Activated naive CD4-positive, alpha-beta T cell treated with anti-CD3 and anti-CD28 coated beads, Interleukin-2, amount 10 ng/mL, durations not matched to agents 7 days and 5 days (primary cell): ENCODE measurements at regions of chr3 and their contacts with region 1.

Region 1: GRCh38 chr3:4350789-4351163 is 47.6 kb downstream of the SETMAR start:
- DNase-seq: peak; percentile 61
- H3K4me3 Mint-ChIP-seq: peak overlapping the region; percentile 49
- H3K27ac Mint-ChIP-seq: peak overlapping the region; percentile 2
- H3K4me1 Mint-ChIP-seq: peaks cover 21% of the 10 kb centered on the region
- H3K27me3 Mint-ChIP-seq: no peaks in the 10 kb centered on the region

Region 2: DNA sequence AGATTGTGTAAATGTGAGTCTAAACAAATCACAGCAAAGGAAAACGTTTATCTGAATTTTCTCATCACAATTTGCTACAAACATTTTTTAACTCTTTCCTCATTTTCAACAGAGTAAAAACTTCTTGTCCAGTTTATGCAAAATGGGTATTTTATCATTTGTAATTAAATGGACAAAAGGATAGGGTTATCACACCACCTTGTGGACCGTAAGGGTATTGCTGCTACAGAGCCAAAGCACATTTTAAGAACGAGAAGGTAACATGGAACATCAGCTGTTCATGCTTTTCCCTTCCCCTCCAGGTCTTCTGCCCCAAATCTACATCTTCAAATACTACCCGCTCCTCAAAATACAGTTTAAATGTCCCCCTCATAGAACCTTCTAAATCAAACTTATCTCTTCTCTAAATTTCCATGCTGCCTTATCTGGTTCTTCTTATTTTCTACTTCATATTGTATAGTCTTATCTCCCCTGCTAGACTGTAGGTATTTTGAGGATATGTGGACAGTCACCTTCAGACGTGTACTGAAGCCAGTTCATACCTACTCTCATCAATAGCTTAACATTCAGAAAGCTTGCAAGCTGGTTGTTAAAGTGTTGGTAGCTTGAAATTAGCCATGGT is 60.4 kb before region 1 on chr3:
- CTCF ChIA-PET with region 1: no interaction called
- DNase-seq: peak; percentile 45
- H3K4me3 Mint-ChIP-seq: no peak overlapping the region
- H3K27ac Mint-ChIP-seq: no peak overlapping the region
- H3K4me1 Mint-ChIP-seq: peaks cover 6% of the 10 kb centered on the region
- H3K27me3 Mint-ChIP-seq: no peaks in the 10 kb centered on the region

Region 3: GRCh38 chr3:4340411-4341335 is 10.1 kb before region 1 on chr3:
- CTCF ChIA-PET with region 1: interaction called, 22 read pairs
- DNase-seq: no peak
- H3K4me3 Mint-ChIP-seq: no peak overlapping the region
- H3K27ac Mint-ChIP-seq: no peak overlapping the region
- H3K4me1 Mint-ChIP-seq: peaks cover 5% of the 10 kb centered on the region
- H3K27me3 Mint-ChIP-seq: peaks cover 4% of the 10 kb centered on the region

Region 4: GRCh38 chr3:4373669-4374068 is 22.9 kb after region 1 on chr3:
- CTCF ChIA-PET with region 1: no interaction called
- DNase-seq: no peak
- H3K4me3 Mint-ChIP-seq: no peak overlapping the region
- H3K27ac Mint-ChIP-seq: no peak overlapping the region
- H3K4me1 Mint-ChIP-seq: no peaks in the 10 kb centered on the region
- H3K27me3 Mint-ChIP-seq: no peaks in the 10 kb centered on the region

Region 5: GRCh38 chr3:4493014-4493940 is 142.5 kb after region 1 on chr3 and contains the start of gene ITPR1:
- CTCF ChIA-PET with region 1: interaction called, 24 read pairs
- DNase-seq: peak; percentile 99
- H3K4me3 Mint-ChIP-seq: peak within 1 kb of the TSS; percentile 93
- H3K27ac Mint-ChIP-seq: peak within 1 kb of the TSS; percentile 80
- H3K4me1 Mint-ChIP-seq: peaks cover 39% of the 10 kb centered on the region
- H3K27me3 Mint-ChIP-seq: peaks cover 22% of the 10 kb centered on the region

Region 6: DNA sequence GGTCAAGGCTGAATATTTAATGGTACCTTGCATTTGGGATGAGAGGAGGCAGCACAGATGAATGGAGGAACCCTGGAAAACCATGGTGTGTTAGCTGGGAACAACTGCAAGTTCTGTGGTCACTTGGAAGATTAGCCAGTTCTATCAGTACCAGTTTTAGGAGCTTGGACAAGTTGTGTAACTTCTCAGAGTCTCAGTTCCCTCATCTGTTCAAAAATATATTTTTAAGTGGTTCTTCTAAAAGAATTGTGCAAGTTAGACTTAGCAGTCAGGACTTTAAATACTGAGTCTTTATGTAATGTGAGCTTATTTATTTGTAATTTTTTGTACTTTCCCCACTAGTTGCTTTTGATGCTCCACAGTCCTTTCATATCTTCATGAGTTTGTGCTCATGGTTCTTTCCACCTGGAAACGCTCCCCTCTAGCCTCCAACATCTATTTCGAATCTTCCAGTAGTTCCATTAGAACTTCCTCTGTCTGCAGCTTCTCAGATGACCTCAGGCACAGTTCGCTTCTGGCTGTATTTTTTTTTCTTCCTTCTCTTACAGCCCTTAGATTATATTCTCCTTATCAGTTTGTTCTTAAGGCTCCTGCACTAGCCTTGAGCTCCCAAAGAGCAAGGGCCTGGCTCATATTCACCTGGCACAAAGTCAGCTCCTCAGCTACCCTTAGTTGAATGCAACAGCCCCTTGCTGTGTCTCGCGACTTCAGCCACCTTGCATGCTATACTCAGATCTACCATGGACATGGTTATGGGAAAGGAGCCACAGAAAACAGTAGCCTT is 169.4 kb after region 1 on chr3:
- CTCF ChIA-PET with region 1: interaction called, 15 read pairs
- DNase-seq: no peak
- H3K4me3 Mint-ChIP-seq: no peak overlapping the region
- H3K27ac Mint-ChIP-seq: peak overlapping the region; percentile 35
- H3K4me1 Mint-ChIP-seq: peaks cover 34% of the 10 kb centered on the region
- H3K27me3 Mint-ChIP-seq: no peaks in the 10 kb centered on the region

Region 7: DNA sequence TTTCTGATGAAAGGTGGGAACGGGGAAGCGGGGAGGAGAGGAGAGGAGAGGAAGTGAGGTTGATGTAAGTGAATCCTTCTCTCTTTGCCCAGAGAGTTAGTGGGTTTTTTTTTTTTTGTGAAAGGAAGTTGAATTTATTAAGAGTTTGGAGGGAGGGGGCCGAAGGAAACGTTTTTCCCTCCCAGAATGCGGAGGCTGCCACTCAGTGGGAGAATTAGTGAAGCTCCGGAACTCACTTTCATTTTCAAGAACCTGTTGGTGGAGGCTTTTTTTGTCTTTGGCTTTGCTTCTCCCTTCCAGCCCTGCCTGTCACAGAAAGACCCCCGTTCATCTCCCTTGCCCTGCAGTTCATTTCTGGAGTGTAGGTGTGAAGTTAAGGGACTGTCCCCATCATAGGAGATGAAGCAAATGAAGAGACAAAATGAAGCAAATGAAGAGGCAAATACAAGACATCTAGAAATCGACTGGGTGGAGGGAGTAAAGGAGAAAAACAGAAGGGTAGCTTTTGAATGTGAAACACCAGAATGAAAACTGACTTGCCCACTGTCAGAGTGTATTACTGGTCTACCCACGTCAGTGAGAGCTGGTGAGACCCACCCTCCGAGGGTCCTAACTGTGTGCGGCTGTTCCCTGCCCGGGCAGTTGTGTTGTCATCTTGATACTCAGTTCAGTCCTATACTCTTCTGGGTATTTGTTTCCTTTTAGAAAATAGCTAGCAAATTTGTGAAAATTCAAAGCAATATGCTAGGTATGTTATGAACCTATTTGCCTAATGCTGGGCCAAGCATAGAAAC is 233.9 kb after region 1 on chr3:
- CTCF ChIA-PET with region 1: interaction called, 29 read pairs
- DNase-seq: peak; percentile 37
- H3K4me3 Mint-ChIP-seq: peak overlapping the region; percentile 72
- H3K27ac Mint-ChIP-seq: peak overlapping the region; percentile 78
- H3K4me1 Mint-ChIP-seq: peaks cover 26% of the 10 kb centered on the region
- H3K27me3 Mint-ChIP-seq: no peaks in the 10 kb centered on the region

Region 8: DNA sequence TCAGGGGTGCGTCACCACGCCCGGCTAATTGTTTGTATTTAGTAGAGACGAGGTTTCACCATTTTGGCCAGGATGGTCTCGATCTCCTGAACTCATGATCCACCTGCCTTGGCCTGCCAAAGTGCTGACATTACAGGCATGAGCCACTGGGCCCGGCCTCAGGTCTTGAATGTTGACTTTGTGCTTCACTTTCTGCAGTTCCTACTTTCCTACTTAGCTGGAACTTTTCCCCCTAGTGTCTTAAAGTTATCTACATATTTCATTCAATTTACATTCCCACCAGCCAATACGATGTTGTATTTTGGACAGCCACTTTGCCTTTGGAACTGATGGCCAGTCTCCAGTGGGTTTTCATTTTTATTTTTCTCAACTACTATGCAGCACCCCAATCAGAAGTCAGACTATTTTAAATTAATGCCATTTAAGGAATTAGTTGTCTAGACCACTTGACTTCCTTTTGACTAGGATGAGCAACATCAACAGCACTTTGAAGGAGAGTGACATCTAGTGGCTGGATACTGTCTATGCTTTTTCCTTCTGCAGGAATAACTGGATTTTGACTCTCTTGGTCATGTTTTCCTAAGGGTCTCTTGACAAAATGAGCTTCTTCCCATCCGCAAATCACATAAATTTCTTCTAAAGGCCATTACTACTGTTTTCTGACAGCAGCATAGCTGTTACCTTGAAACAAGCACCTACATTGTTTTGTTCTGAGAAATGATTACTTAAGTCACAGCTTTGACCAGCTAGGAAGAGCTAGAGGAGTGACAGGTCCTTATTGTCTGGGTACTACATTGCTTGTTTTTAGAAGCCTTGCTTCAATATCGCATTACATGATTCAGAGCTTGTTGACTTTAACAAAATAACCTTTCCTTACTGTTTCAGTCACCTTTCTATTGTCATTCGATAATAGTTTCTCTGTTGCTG is 282.6 kb after region 1 on chr3:
- CTCF ChIA-PET with region 1: interaction called, 62 read pairs
- DNase-seq: no peak
- H3K4me3 Mint-ChIP-seq: no peak overlapping the region
- H3K27ac Mint-ChIP-seq: peak overlapping the region; percentile 16
- H3K4me1 Mint-ChIP-seq: peaks cover 5% of the 10 kb centered on the region
- H3K27me3 Mint-ChIP-seq: no peaks in the 10 kb centered on the region